Activated CD4-positive, alpha-beta T cell treated with anti-CD3 and anti-CD28 coated beads, Interleukin-2, amount 10 ng/mL, durations not matched to agents 24 days and 14 days (primary cell): ENCODE measurements at regions of chr19 and their contacts with region 1.

Region 1: DNA sequence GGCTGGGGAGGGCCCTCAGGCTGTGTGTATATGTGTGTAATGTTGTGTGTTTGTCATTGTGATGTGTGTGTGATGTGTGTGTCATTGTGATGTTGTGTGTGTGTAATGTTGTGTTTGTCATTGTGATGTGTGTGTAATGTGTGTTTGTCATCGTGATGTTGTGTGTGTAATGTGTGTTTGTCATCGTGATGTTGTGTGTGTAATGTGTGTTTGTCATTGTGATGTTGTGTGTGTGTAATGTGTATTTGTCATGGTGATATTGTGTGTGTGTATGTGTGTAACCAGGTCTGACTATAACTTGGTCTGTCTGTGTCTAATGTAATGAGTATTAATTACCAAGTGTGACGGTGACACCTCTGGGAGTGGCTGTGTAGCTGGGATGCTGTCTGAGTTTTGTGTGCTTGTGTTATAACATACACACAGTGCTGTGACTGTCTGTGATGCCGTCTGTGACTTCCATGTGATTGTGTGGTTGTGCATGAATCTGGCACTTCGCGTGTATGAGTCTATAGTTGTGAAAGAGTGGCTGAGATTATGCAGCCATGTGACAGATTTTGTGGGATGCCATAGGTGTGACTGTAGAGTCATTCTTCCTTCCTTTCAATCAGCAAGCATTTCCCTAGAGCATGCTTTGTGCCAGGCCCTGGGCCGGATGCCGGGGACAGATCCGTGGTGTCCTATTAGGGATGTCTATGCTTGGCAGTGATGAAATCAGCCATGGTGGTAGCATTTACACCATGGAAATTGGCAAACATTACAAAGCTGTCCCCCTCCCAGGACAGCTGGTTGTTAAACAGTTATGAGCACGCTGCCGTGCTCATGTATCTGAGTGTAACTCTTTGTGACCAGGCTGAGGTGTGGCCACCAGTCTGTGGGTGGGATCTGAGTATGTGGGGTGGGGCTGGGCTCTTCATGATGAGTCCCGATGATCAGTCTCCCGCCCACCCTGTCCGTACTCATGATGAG is 6.4 kb downstream of the TNFSF14 start:
- DNase-seq: no peak
- H3K4me3 Mint-ChIP-seq: peak overlapping the region; percentile 39
- H3K27ac Mint-ChIP-seq: no peak overlapping the region
- H3K4me1 Mint-ChIP-seq: peaks cover 46% of the 10 kb centered on the region
- H3K27me3 Mint-ChIP-seq: no peaks in the 10 kb centered on the region

Region 2: DNA sequence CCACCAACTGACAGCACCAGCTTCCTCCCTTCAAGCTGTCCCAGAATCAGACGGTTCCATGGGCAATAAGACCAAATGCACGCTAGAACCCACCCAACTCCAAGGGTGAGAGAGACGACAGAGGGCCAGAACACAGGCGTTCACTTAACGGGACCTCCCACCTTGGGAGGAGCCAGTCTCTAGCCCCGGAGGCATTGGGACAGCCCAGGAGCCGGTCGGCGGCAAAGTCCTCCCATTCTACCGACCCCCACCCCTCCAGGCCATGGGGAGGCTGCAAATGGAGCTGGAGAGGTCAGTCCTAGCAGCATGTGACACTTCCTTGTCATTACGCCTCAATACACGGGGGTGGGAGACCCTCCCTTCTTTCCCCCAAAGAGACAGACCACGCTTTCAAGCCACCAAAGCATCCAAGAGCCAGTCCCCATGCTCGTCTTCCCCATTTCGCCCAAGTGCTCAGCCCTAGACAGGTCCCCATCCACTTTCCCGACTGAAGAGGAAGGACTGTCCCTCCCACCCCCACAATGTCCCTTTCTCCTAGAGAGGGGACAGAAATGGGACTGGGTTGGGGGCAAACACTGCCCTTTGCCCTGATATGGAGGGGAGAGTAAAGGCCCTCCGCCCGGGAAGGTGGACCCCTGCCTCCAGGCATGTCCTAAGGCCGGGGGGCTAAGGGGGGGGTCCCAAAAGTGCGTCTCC is 239.9 kb before region 1 on chr19:
- intact Hi-C with region 1: no loop called
- DNase-seq: peak; percentile 83
- H3K4me3 Mint-ChIP-seq: peak overlapping the region; percentile 97
- H3K27ac Mint-ChIP-seq: peak overlapping the region; percentile 82
- H3K4me1 Mint-ChIP-seq: peaks cover 26% of the 10 kb centered on the region
- H3K27me3 Mint-ChIP-seq: no peaks in the 10 kb centered on the region

Region 3: DNA sequence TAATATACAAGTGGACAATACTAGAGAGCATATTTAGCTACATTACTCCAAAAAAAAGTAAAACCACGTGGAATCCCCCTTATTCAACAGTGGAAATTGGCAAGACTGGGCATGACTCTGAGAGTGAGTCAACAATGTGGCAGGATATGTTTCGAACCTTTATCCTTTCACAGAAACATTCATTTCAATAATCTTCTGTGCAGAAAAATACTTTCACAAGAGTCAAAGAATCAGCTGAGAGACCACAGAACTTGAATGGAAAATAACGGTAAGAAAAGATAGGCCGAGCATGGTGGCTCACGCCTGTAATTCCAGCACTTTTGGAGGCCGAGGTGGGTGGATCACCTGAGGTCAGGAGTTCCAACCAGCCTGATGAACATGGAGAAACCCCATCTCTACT is 47.5 kb before region 1 on chr19:
- intact Hi-C with region 1: loop called (anchors 2 kb)
- DNase-seq: peak; percentile 68
- H3K4me3 Mint-ChIP-seq: no peak overlapping the region
- H3K27ac Mint-ChIP-seq: peak overlapping the region; percentile 73
- H3K4me1 Mint-ChIP-seq: peaks cover 22% of the 10 kb centered on the region
- H3K27me3 Mint-ChIP-seq: peaks cover 25% of the 10 kb centered on the region

Region 4: GRCh38 chr19:6639439-6639838 is 24.1 kb before region 1 on chr19:
- intact Hi-C with region 1: loop called (anchors 1 kb)
- DNase-seq: peak; percentile 77
- H3K4me3 Mint-ChIP-seq: peak overlapping the region; percentile 40
- H3K27ac Mint-ChIP-seq: peak overlapping the region; percentile 87
- H3K4me1 Mint-ChIP-seq: peaks cover 36% of the 10 kb centered on the region
- H3K27me3 Mint-ChIP-seq: no peaks in the 10 kb centered on the region